Heart right ventricle (tissue), 16 donors: ENCODE measurements at regions of chr2 and their contacts with region 1.

Region 1: GRCh38 chr2:240530181-240530580 is 27.6 kb downstream of the ANKMY1 start:
- DNase-seq: no peak
- ATAC-seq: no peak
- H3K4me3 ChIP-seq: no peak overlapping the region
- H3K27ac ChIP-seq: no peak overlapping the region
- H3K4me1 ChIP-seq: no peaks in the 10 kb centered on the region
- H3K27me3 ChIP-seq: no peaks in the 10 kb centered on the region
- CTCF ChIP-seq: no peak

Region 2: DNA sequence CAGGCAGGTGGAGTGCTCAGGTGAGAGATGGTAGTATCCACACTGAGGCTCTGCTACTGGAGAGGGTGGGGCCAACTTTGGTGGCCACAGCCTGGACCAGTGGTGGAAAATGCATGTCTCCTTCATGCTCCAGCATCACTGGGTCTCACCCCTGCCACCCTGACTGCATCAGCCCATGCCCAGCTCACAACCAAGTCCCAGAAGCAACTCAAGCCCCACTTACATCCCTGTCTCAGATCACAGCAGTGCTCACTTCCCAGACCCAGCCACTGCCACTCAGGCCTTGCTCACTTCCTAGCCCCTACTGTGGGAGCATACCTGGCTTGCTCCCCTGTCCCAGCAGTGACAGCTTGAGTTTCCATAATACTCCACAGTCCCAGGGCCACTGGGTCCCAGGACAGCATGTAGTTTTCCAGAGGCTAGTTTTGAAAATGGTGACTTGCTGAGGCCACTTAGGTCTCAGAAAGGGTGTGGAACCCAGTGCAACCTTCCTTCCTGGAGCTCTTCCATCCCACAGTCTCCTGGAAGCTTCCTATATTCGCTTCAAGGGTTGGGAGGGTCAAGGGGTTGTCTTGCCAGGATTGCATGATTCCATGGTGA is 35.9 kb before region 1 on chr2:
- intact Hi-C with region 1: loop called in 1 of 10 experiments (anchors 2 kb)
- DNase-seq: no peak
- ATAC-seq: no peak
- H3K4me3 ChIP-seq: no peak overlapping the region
- H3K27ac ChIP-seq: no peak overlapping the region
- H3K4me1 ChIP-seq: no peaks in the 10 kb centered on the region
- H3K27me3 ChIP-seq: no peaks in the 10 kb centered on the region
- CTCF ChIP-seq: no peak

Region 3: DNA sequence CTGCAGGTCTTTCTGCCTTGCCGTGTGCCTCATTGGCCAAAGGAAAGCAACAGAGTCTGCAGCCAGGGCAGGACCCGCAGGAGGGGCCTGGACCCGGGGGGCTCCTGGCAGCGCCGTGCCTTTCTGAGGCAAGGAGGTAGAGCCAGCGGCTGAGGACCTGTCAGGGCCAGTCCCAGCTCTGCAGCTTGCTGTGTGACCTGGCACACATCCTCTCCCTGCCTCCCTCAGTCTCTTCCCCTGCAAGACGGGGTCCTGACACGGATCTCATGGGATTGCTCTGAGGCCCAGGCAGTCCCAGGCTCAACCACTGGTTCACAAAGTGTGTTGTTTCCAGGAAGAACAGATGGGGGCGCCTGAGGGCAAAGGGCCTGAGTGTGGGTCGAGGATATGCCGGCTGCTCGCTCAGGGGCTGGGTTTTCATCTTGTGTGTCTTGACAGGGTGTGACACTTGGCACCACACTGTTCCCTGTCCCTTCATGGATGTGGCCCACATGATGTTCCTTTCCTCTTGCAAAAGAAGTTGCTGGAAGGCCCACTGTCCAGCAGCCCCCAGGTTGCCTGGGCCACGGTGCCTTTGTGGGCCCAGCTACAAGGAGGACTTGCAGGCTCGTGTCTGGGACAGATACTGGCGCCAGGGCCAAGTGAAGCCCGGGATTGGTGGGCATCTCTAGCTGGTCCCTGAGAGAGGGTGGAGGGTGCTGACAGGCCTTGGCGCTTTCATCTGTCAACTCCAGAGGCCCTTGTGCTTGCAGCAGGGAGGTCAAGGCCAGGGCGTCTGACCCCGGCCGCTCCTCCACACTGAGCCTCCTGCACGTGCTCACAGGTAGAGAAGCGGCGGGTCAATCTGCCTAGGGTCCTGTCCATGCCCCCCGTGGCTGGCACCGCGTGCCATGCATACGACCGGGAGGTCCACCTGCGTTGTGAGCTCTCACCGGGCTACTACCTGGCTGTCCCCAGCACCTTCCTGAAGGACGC is 65.6 kb after region 1 on chr2:
- intact Hi-C with region 1: no loop called
- DNase-seq: no peak
- ATAC-seq: peak; percentile 9 to 49 (median 22)
- H3K4me3 ChIP-seq: peak overlapping the region in 1 of 10 donors; percentile 3
- H3K27ac ChIP-seq: peak overlapping the region in 9 of 10 donors; percentile 14 to 79 (median 67)
- H3K4me1 ChIP-seq: peaks cover 3 to 46% (median 20%) of the 10 kb centered on the region in 9 donors
- H3K27me3 ChIP-seq: no peaks in the 10 kb centered on the region
- CTCF ChIP-seq: peak in 5 of 9 donors; percentile 29 to 44 (median 42)

Region 4: GRCh38 chr2:241064008-241064801 is 534.0 kb after region 1 on chr2:
- intact Hi-C with region 1: no loop called
- DNase-seq: peak in 1 of 2 donors; percentile 6
- ATAC-seq: peak in 7 of 8 donors; percentile 6 to 50 (median 34)
- H3K4me3 ChIP-seq: peak overlapping the region in 1 of 10 donors; percentile 11
- H3K27ac ChIP-seq: no peak overlapping the region
- H3K4me1 ChIP-seq: peaks cover 0 to 4% (median 0%) of the 10 kb centered on the region in 9 donors
- H3K27me3 ChIP-seq: peaks cover 0 to 9% (median 0%) of the 10 kb centered on the region in 7 donors
- CTCF ChIP-seq: no peak